Activated B cell treated with CpG ODN at 0.5 μM for 24 hours (primary cell): ENCODE measurements at regions of chr11 and their contacts with region 1.

Region 1: DNA sequence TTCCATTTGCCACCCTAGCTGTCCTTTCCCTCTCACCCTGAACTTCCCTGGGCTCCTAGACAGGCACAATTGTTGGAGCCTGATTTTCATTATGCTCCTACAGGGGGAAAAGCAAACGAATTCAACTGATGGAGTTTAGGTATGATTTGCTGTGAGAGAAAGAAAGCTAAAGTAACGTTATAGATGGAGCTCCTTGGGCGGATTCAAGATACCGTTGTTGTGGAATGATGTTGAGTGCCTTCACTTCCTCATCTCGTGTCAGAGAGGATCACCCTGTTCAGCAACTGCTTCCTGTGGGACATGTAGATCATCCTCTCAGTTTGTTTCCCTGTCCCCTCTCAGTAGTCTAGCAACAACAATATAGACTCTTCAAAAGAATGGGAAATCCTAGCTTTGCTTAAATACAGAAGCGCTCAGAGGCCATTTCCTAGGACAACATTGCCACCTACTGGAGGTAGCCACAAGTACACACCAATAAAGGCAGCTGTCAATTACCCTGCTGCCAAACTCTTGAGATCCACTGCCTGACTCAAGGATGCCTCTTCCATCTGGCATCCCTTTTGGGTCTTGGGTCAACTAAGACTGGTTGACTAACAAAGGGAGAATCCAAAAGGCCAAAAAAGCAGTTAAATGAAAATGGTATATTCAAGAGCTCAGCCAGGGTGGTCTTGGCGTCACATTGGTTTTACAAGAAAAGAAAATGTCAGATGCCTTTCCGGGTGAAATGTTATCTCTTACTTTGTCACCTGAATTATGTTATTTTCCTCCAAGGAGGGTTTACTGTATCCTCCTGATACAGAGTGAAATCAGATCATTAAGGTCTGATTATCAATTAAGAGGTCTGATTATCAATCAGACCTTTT is 13.5 kb upstream of the DTX4 start:
- DNase-seq: no peak
- ATAC-seq: peak; percentile 99
- H3K4me3 Mint-ChIP-seq: peak overlapping the region; percentile 55
- H3K27ac Mint-ChIP-seq: peak overlapping the region; percentile 77
- H3K4me1 Mint-ChIP-seq: peaks cover 27% of the 10 kb centered on the region
- H3K27me3 Mint-ChIP-seq: no peaks in the 10 kb centered on the region
- CTCF ChIP-seq: no peak

Region 2: DNA sequence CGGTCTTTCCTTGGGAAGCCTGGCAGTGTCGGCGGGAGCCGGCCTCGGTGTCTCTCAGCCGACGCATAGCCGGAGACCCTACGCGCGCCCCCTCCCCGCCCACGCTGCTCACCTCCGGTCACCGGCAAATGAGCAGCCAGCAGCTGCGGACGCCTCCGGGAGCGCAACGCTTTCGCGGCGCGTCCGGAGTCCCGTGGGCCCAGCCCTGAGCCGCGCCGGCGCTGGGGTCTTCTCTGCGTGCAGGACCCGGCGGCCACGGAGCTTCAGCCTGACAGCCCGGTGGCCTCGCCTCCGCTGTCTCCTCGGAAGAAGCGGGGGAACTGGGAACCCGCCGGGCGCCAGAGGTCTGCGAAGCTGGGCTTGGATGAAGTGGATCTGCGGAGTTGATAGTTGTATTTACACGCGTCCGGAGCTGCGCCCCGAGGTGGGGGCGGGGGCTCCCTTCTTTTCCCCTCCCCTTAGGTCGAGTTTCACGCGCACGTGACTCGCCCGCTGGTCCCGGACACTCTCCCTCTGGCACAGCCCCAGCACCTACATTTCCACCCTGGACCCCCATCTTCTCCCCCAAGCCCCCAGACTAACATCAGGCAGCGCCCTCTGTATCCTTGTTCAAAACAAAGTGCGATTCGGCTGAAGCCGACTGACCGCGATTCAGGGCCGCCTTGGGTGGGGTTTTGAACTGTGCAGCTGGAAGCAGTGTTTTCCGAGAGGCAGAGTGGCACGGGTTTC is 1642.9 kb before region 1 on chr11 and contains the start of gene SLC43A1:
- CTCF ChIA-PET with region 1: no interaction called
- POLR2A ChIA-PET with region 1: interaction called, 10 read pairs
- intact Hi-C with region 1: loop called (anchors 10 kb)
- DNase-seq: peak; percentile 27
- ATAC-seq: peak; percentile 29
- H3K4me3 Mint-ChIP-seq: peak within 1 kb of the TSS; percentile 97
- H3K27ac Mint-ChIP-seq: peak within 1 kb of the TSS; percentile 80
- H3K4me1 Mint-ChIP-seq: peaks cover 43% of the 10 kb centered on the region
- H3K27me3 Mint-ChIP-seq: no peaks in the 10 kb centered on the region
- CTCF ChIP-seq: no peak
- total RNA-seq, gene SLC43A1: 11.1 and 12.8 TPM in 2 replicates

Region 3: DNA sequence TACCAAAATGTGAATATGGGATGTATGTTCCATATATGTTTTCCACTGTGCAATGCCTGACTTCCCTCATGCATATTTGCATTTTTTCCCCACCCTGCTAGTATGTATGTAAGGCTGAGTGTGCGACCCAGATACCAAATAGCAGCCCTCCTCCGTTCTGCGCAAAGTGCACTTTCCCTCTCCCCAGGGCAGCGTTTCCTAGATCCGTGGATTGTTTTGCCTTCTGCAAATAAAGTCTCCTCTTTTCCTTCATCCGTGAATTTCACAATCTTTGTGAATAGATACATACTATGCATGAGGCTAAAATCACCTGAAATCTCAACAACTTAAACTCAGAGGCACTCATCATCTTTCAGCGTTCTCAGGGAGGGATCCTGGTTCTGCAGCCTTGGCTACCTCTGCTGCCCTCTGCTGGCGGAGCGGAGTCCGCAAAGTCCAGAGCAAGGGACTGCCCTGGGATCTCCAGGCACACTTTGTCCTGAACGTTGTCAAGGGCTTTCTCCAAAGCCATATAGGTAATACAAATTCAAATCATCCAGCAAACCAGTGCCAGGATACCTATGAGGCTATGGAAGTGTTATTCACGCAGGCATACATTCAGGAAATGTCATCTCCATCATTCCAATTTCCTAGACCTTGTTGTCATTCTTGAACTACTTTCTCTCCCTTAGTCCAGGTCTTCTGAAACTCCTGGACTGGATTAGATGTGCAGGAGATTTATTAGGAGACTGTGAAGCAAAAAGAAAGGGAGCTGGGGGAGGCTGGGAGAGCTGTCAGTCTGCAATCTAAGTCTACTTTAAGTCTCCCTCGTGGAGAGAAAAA is 482.9 kb before region 1 on chr11:
- CTCF ChIA-PET with region 1: interaction called, 12 read pairs
- POLR2A ChIA-PET with region 1: no interaction called
- intact Hi-C with region 1: no loop called
- DNase-seq: peak; percentile 67
- ATAC-seq: peak; percentile 80
- H3K4me3 Mint-ChIP-seq: no peak overlapping the region
- H3K27ac Mint-ChIP-seq: no peak overlapping the region
- H3K4me1 Mint-ChIP-seq: no peaks in the 10 kb centered on the region
- H3K27me3 Mint-ChIP-seq: peaks cover 3% of the 10 kb centered on the region
- CTCF ChIP-seq: peak; percentile 59

Region 4: DNA sequence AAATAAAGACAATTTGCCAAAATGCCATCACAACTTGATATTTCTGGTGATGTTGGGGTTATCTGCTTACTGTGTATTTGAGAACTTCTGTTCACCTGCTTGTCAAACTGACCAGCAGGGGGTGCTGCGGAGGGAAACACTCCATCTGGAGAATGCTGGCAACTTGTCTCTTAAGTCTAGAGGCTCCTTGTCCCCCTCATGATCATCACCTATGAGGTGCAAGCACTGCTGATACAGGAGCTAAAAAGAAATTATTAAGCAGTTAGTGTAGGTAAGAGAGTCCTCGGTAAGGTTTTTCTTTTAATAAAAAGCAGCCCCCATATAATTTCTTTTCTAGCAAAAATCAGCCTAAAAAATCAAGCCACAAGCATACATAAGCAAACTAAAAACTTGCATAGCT is 105.0 kb before region 1 on chr11:
- CTCF ChIA-PET with region 1: interaction called, 27 read pairs
- POLR2A ChIA-PET with region 1: interaction called, 6 read pairs
- intact Hi-C with region 1: loop called (anchors 5 kb)
- DNase-seq: peak; percentile 45
- ATAC-seq: no peak
- H3K4me3 Mint-ChIP-seq: no peak overlapping the region
- H3K27ac Mint-ChIP-seq: peak overlapping the region; percentile 66
- H3K4me1 Mint-ChIP-seq: peaks cover 73% of the 10 kb centered on the region
- H3K27me3 Mint-ChIP-seq: no peaks in the 10 kb centered on the region
- CTCF ChIP-seq: no peak

Region 5: GRCh38 chr11:59142530-59143507 is 15.6 kb before region 1 on chr11 and contains the start of gene FAM111A:
- CTCF ChIA-PET with region 1: interaction called, 97 read pairs
- POLR2A ChIA-PET with region 1: interaction called, 53 read pairs
- intact Hi-C with region 1: loop called (anchors 1 kb)
- DNase-seq: peak; percentile 73
- ATAC-seq: peak; percentile 76
- H3K4me3 Mint-ChIP-seq: peak within 1 kb of the TSS; percentile 99
- H3K27ac Mint-ChIP-seq: peak within 1 kb of the TSS; percentile 99
- H3K4me1 Mint-ChIP-seq: peaks cover 71% of the 10 kb centered on the region
- H3K27me3 Mint-ChIP-seq: no peaks in the 10 kb centered on the region
- CTCF ChIP-seq: no peak
- total RNA-seq, gene FAM111A: 51.5 and 64.3 TPM in 2 replicates

Region 6: DNA sequence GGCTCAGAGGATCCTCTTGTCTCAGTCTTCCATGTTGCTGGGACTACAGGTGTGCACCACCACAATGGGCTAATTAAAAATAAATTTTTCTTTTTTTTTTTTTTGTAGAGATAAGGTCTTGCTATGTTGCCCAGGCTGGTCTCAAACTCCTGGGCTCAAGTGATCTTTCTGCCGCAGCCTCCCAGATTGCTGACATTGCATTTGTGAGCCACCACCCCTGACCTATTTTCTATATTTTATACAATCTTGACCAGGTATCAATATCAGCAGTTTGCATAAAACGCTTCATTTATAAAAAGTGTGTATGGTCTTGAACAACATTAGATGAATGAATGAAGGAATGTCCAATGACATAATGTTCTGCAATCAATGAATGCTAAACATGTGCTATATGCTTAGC is 587.7 kb after region 1 on chr11:
- CTCF ChIA-PET with region 1: no interaction called
- POLR2A ChIA-PET with region 1: no interaction called
- intact Hi-C with region 1: no loop called
- DNase-seq: no peak
- ATAC-seq: no peak
- H3K4me3 Mint-ChIP-seq: no peak overlapping the region
- H3K27ac Mint-ChIP-seq: no peak overlapping the region
- H3K4me1 Mint-ChIP-seq: no peaks in the 10 kb centered on the region
- H3K27me3 Mint-ChIP-seq: peaks cover 35% of the 10 kb centered on the region
- CTCF ChIP-seq: no peak